ENCODE measurements at regions of chr2 and their contacts with region 1.

Region 1: DNA sequence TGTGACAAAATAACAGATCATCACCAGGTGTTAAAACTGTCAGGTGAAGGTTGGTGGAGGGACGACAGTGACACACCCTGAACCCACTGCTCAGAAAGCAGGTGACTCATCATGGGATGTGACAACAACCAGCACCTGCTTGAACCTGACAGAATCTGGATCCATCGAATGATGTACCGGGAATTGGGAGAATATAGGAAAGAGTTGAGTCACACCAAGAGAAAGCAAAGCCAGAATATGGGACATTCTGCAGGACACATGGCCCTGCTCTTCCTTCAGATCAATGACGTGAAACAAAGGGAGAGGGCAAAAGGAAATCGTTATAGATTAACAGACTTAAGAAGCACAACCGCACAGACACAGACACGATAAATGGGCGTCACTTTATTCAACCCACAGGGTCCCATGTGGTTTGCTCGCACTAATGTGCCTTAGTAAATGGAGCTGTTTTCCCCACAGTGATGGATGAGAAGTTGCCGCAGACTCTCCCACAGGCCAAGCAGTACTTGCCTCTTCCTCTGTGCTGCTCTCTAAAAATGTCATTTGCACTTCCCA is 100.1 kb downstream of the CRACDL start:
- DNase-seq: no peak
- H3K4me3 ChIP-seq: no peak overlapping the region
- H3K27ac ChIP-seq: no peak overlapping the region
- H3K4me1 ChIP-seq: 0 out of 2 replicates have a peak, but pooled peaks cover 7% of the 10 kb centered on the region
- H3K27me3 ChIP-seq: no peaks in the 10 kb centered on the region

Region 2: GRCh38 chr2:98479959-98480524 is 355.9 kb before region 1 on chr2:
- in situ Hi-C with region 1: no loop called
- DNase-seq: peak; percentile 83
- H3K4me3 ChIP-seq: no peak overlapping the region
- H3K27ac ChIP-seq: no peak overlapping the region
- H3K4me1 ChIP-seq: peaks cover 12% of the 10 kb centered on the region
- H3K27me3 ChIP-seq: no peaks in the 10 kb centered on the region

Region 3: GRCh38 chr2:98664327-98664726 is 171.6 kb before region 1 on chr2:
- in situ Hi-C with region 1: loop called (anchors 25 kb)
- DNase-seq: peak; percentile 30
- H3K4me3 ChIP-seq: no peak overlapping the region
- H3K27ac ChIP-seq: no peak overlapping the region
- H3K4me1 ChIP-seq: peaks cover 4% of the 10 kb centered on the region; the same call in 1 of the 2 replicates
- H3K27me3 ChIP-seq: peaks cover 7% of the 10 kb centered on the region; the same call in 1 of the 2 replicates

Region 4: GRCh38 chr2:99754210-99754609 is 918.3 kb after region 1 on chr2:
- in situ Hi-C with region 1: no loop called
- DNase-seq: peak; percentile 79
- H3K4me3 ChIP-seq: peak overlapping the region; percentile 19; the same call in 1 of the 2 replicates
- H3K27ac ChIP-seq: peak overlapping the region; percentile 4; the same call in 1 of the 2 replicates
- H3K4me1 ChIP-seq: peaks cover 17% of the 10 kb centered on the region
- H3K27me3 ChIP-seq: no peaks in the 10 kb centered on the region